Activated CD4-positive, alpha-beta memory T cell treated with anti-CD3 and anti-CD28 coated beads for 36 hours (primary cell): ENCODE measurements at regions of chr2 and their contacts with region 1.

Region 1: DNA sequence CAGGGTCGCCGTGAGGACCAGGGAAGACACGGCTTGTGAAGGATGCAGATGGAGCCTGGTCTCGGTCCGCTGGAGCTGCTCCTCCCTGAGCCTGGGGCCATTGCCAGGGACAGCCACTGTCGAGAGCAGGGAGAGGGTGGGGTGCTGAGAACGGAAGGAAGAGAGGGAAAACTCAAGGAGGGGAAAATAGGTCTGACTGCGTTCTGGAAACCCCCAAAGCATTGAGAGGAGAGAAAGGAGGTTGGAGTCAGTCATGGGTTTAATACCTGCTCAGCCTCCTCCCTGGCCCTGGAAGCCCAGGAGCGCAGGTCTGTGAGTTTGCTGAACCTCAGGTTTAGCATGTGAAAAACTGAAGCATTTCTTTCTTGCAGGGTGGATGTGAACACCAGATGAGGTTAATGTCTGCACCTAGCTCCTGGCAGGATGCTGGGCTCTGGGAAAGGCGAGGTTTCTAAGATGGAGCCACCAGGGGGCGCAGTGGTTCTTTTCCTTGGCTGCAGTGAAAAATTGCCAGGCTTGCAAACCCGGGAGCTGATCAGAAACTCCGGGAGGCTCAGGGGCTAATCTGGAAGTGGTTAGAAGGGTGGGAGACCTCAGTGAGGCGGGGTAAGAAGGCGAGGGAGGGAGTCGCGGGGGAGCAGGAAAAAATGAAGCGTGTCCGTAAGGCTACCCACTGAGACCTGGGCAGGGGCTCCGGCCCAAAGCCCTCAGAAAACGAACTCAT is 33.6 kb upstream of the RNF149 start:
- DNase-seq: peak; percentile 82
- H3K4me3 Mint-ChIP-seq: no peak overlapping the region
- H3K27ac Mint-ChIP-seq: peak overlapping the region; percentile 16
- H3K4me1 Mint-ChIP-seq: peaks cover 20% of the 10 kb centered on the region
- H3K27me3 Mint-ChIP-seq: no peaks in the 10 kb centered on the region

Region 2: DNA sequence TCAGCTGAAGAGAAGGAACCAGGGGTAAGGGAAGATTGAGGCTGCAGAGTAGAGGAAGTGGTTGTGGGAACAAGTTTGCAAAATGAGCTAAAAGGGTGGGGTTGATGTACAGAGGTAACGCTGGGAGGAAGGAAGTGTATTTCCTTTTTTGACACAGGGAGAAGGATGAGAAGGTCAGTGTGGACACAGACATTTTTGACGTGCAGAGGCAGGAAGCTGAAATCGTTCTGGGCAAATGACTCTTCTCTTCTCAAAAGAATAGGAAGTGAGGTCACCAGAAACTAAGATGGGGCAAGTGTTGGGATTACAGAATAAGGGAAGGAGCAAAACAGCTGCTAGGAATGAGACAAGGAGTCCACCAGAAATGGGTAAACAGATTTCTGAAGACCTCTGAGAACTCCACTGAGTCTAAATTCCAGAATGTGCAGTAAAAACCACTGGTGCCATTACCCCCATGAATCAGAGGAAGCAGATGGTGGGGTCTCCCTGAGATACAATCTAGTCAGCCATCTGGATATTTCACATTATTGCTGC is 13.5 kb before region 1 on chr2:
- CTCF ChIA-PET with region 1: interaction called, 80 read pairs
- POLR2A ChIA-PET with region 1: no interaction called
- intact Hi-C with region 1: no loop called
- DNase-seq: peak; percentile 57
- H3K4me3 Mint-ChIP-seq: no peak overlapping the region
- H3K27ac Mint-ChIP-seq: no peak overlapping the region
- H3K4me1 Mint-ChIP-seq: peaks cover 38% of the 10 kb centered on the region
- H3K27me3 Mint-ChIP-seq: no peaks in the 10 kb centered on the region

Region 3: GRCh38 chr2:101387151-101387807 is 45.2 kb after region 1 on chr2 and contains the start of gene CREG2:
- CTCF ChIA-PET with region 1: interaction called, 58 read pairs
- POLR2A ChIA-PET with region 1: no interaction called
- intact Hi-C with region 1: loop called (anchors 1 kb)
- DNase-seq: peak; percentile 70
- H3K4me3 Mint-ChIP-seq: peak within 1 kb of the TSS; percentile 52
- H3K27ac Mint-ChIP-seq: no peak within 1 kb of the TSS
- H3K4me1 Mint-ChIP-seq: peaks cover 11% of the 10 kb centered on the region
- H3K27me3 Mint-ChIP-seq: peaks cover 32% of the 10 kb centered on the region
- total RNA-seq, gene CREG2: not detected

Region 4: DNA sequence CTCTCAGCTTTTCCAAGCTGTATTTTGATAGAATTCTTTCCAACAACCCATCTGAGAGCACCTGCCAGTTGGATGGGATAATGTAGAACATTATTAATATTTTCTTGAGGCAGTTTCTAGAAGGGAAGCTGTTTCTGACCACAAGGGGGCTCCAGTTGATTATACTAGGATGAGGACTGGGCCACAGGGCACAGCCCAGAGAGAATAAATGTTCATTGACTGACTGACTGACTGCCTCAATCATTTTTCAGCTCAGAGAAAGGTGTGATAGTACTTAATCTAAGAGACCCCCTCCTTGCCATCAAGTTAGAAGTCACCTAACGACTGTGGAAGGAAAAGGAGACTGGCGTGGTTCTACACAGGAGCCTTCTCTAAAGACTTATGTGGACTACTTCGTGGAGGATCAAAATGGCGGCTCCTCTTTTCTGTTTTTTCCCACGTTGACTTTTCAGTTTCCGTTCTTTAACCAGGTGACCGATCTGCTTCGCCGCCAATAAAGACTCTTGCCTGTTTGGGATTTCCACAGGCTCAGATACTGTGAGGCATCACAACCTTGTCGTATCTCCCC is 77.1 kb after region 1 on chr2:
- CTCF ChIA-PET with region 1: interaction called, 16 read pairs
- POLR2A ChIA-PET with region 1: no interaction called
- intact Hi-C with region 1: loop called (anchors 2 kb)
- DNase-seq: peak; percentile 58
- H3K4me3 Mint-ChIP-seq: no peak overlapping the region
- H3K27ac Mint-ChIP-seq: no peak overlapping the region
- H3K4me1 Mint-ChIP-seq: no peaks in the 10 kb centered on the region
- H3K27me3 Mint-ChIP-seq: no peaks in the 10 kb centered on the region

Region 5: GRCh38 chr2:101831351-101831865 is 489.3 kb after region 1 on chr2:
- CTCF ChIA-PET with region 1: interaction called, 19 read pairs
- POLR2A ChIA-PET with region 1: no interaction called
- intact Hi-C with region 1: loop called (anchors 10 kb)
- DNase-seq: peak; percentile 76
- H3K4me3 Mint-ChIP-seq: no peak overlapping the region
- H3K27ac Mint-ChIP-seq: peak overlapping the region; percentile 71
- H3K4me1 Mint-ChIP-seq: peaks cover 52% of the 10 kb centered on the region
- H3K27me3 Mint-ChIP-seq: no peaks in the 10 kb centered on the region